ENCODE measurements at regions of chr5 and their contacts with region 1.

Region 1: GRCh38 chr5:36690041-36690961 is 83.9 kb downstream of the SLC1A3 start:
- DNase-seq: peak; percentile 64 to 80
- ATAC-seq: peak; percentile 66 to 85 (median 72)
- H3K4me3 ChIP-seq: peak overlapping the region; percentile 19 to 66 (median 61)
- H3K27ac ChIP-seq: peak overlapping the region; percentile 26 to 85 (median 72)
- H3K4me1 ChIP-seq: peaks cover 8 to 52% (median 28%) of the 10 kb centered on the region in 9 donors
- H3K27me3 ChIP-seq: peaks cover 0 to 6% (median 0%) of the 10 kb centered on the region in 7 donors
- CTCF ChIP-seq: peak; percentile 45 to 87 (median 80)

Region 2: GRCh38 chr5:36241631-36242533 is 448.4 kb before region 1 on chr5 and contains the start of gene NADK2:
- intact Hi-C with region 1: loop called in 1 of 10 experiments (anchors 10 kb)
- DNase-seq: peak; percentile 95 to 97
- ATAC-seq: peak; percentile 92 to 97 (median 95)
- H3K4me3 ChIP-seq: peak within 1 kb of the TSS; percentile 63 to 96 (median 90)
- H3K27ac ChIP-seq: peak within 1 kb of the TSS; percentile 87 to 98 (median 97)
- H3K4me1 ChIP-seq: peaks cover 0 to 48% (median 36%) of the 10 kb centered on the region in 9 donors
- H3K27me3 ChIP-seq: no peaks in the 10 kb centered on the region
- CTCF ChIP-seq: peak; percentile 45 to 89 (median 75)
- total RNA-seq, gene NADK2: 35.7 to 53.5 (median 38.9) TPM

Region 3: GRCh38 chr5:36414869-36415282 is 275.4 kb before region 1 on chr5:
- intact Hi-C with region 1: loop called (anchors 1 to 5 kb)
- DNase-seq: no peak
- ATAC-seq: peak in 6 of 8 donors; percentile 43 to 61 (median 52)
- H3K4me3 ChIP-seq: no peak overlapping the region
- H3K27ac ChIP-seq: no peak overlapping the region
- H3K4me1 ChIP-seq: peaks cover 0 to 7% (median 4%) of the 10 kb centered on the region in 9 donors
- H3K27me3 ChIP-seq: no peaks in the 10 kb centered on the region
- CTCF ChIP-seq: peak; percentile 28 to 66 (median 50)

Region 4: GRCh38 chr5:36521838-36522745 is 168.2 kb before region 1 on chr5:
- intact Hi-C with region 1: loop called in 3 of 10 experiments (anchors 5 to 10 kb)
- DNase-seq: peak in 1 of 2 donors; percentile 48
- ATAC-seq: peak; percentile 56 to 96 (median 90)
- H3K4me3 ChIP-seq: no peak overlapping the region
- H3K27ac ChIP-seq: peak overlapping the region in 9 of 10 donors; percentile 54 to 81 (median 61)
- H3K4me1 ChIP-seq: peaks cover 0 to 26% (median 12%) of the 10 kb centered on the region in 9 donors
- H3K27me3 ChIP-seq: no peaks in the 10 kb centered on the region
- CTCF ChIP-seq: no peak

Region 5: DNA sequence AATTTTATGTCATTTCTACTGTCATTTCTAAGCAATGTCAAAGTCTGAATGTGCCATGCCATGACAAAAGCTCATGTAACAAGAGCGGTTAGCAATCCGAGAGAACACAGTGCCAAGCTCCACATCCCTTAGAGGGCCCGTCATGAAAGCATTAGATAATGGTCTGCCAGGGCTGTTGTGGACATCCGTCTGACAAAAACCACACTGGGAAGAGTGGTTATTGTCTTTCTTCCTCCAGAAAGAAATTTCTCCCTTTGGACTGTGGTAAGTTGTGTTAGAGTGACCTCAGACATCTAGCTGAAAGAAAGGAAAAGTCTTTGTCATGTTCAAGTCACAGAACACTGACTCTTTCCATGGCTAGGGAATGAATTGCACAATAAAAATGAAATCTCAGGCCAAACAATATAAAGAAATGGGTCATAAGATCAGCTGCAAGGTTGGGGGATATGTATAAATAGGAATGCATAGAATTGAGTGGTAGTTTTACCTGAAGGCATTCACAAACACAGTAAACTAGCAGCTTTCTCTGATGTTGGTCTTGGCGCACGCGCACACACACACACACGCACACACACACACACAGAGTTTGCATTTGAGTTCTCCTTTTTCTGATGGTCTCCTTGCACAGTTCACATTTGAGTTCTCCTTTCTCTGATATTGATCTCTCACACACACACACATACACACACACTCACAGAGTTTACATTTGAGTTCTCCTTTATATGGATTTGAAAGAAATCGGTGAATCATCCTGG is 78.6 kb before region 1 on chr5:
- intact Hi-C with region 1: loop called in 7 of 10 experiments (anchors 2 to 5 kb)
- DNase-seq: peak in 1 of 2 donors; percentile 44
- ATAC-seq: peak; percentile 27 to 69 (median 58)
- H3K4me3 ChIP-seq: peak overlapping the region in 1 of 10 donors; percentile 66
- H3K27ac ChIP-seq: peak overlapping the region in 9 of 10 donors; percentile 16 to 86 (median 51)
- H3K4me1 ChIP-seq: peaks cover 0 to 56% (median 26%) of the 10 kb centered on the region in 9 donors
- H3K27me3 ChIP-seq: peaks cover 0 to 7% (median 0%) of the 10 kb centered on the region in 7 donors
- CTCF ChIP-seq: no peak

Measured in heart right ventricle (tissue), 16 donors.